H1 (cell line): ENCODE measurements at regions of chr7 and their contacts with region 1.

Region 1: DNA sequence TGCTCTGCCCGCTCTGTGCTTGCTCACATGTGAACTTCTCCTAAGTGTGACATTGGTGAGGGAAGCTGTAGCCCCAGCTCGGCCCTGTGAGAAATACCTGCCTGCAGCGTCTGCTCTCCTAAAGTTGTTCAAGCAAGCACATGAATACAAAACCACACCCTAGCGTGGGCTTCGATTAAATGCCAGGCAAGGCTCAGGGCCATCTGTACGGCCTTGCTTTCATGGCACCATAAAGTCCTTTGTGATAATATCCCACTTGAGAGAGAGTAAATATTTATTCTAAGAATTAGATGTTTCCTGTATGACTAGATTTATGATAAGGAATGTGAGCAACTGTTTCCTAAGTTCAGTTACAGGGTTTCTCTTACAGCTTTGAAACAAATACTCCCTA is 262.8 kb upstream of the KLF14 start:
- DNase-seq: no peak
- H3K4me3 ChIP-seq: no peak overlapping the region
- H3K27ac ChIP-seq: no peak overlapping the region
- H3K4me1 ChIP-seq: peaks cover 0 to 10% (median under 1%) of the 10 kb centered on the region in 4 experiments; a peak in 1 of 7 replicates
- H3K27me3 ChIP-seq: no peaks in the 10 kb centered on the region
- CTCF ChIP-seq: no peak
- EP300 ChIP-seq: no peak
- POLR2A ChIP-seq: no peak
- RAD21 ChIP-seq: no peak

Region 2: GRCh38 chr7:131007394-131008330 is 10.8 kb after region 1 on chr7:
- CTCF ChIA-PET with region 1: interaction called, 14 read pairs
- POLR2A ChIA-PET with region 1: no interaction called
- DNase-seq: peak in 1 of 2 experiments; percentile 67
- H3K4me3 ChIP-seq: 0 out of 8 replicates have a peak overlapping the region, but pooled peaks of 1 of the 4 experiments have one; percentile 18
- H3K27ac ChIP-seq: no peak overlapping the region
- H3K4me1 ChIP-seq: peaks cover 0 to 4% (median under 1%) of the 10 kb centered on the region in 4 experiments; a peak in 6 of 7 replicates
- H3K27me3 ChIP-seq: no peaks in the 10 kb centered on the region; a peak in 1 of 7 replicates
- CTCF ChIP-seq: peak; percentile 29 to 68 (median 60)
- EP300 ChIP-seq: no peak
- POLR2A ChIP-seq: no peak
- RAD21 ChIP-seq: peak; percentile 70 to 74